Naive thymus-derived CD8-positive, alpha-beta T cell (primary cell): ENCODE measurements at regions of chr4 and their contacts with region 1.

Region 1: DNA sequence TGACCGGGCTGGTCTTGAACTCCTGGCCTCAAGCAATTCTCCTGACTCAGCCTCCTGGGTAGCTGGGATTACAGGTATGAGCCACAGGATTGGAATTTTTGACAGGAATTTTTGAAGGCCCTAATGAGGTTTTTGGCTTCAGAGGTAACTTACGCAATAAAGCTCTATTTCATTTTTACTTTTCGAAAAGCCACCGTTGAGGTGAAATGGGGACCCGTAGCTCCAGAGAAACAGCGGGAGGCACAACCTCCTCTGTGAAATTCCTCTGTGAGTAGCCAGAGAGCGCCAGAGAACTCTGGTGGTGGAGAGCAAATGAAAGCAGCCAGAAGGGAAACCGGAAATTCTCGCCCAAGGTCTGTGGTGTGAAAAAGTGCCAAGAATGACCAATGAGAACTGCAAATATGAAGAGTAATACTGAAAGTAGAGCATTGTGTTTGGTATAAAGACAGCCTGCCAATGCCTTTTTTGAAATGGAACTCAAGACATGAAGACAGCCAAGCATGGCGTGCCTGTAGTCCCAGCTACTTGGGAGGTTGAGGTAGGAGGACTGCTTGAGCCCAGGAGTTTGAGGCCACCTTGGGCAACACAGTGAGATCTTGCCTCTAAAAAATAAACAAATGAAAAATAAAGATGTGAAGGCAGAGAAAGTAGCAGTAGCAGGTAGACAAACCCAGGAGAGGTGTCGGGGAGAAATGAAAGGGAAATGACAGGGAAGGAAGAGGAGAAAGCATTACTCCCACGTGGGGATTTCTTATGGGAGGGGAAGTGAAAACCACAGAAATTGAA is 33.0 kb upstream of the TMEM131L start:
- DNase-seq: peak in 9 of 10 donors; percentile 15 to 75 (median 43)
- ATAC-seq: peak; percentile 52 to 68
- H3K4me3 Mint-ChIP-seq: peak overlapping the region; percentile 68 to 96 (median 86)
- H3K27ac Mint-ChIP-seq: peak overlapping the region; percentile 85 to 99 (median 93)
- H3K4me1 Mint-ChIP-seq: peaks cover 27 to 84% (median 69%) of the 10 kb centered on the region in 4 donors
- H3K27me3 Mint-ChIP-seq: no peaks in the 10 kb centered on the region

Region 2: GRCh38 chr4:153383131-153383530 is 50.0 kb before region 1 on chr4:
- POLR2A ChIA-PET with region 1: no interaction called
- DNase-seq: no peak
- ATAC-seq: no peak
- H3K4me3 Mint-ChIP-seq: no peak overlapping the region
- H3K27ac Mint-ChIP-seq: peak overlapping the region in 1 of 10 donors; percentile 40
- H3K4me1 Mint-ChIP-seq: peaks cover 0 to 5% (median 0%) of the 10 kb centered on the region in 4 donors
- H3K27me3 Mint-ChIP-seq: no peaks in the 10 kb centered on the region

Region 3: GRCh38 chr4:153573881-153574802 is 141.0 kb after region 1 on chr4:
- POLR2A ChIA-PET with region 1: interaction called, 14 read pairs
- DNase-seq: peak; percentile 35 to 86 (median 62)
- ATAC-seq: peak; percentile 93
- H3K4me3 Mint-ChIP-seq: peak overlapping the region in 8 of 10 donors; percentile 3 to 66 (median 50)
- H3K27ac Mint-ChIP-seq: peak overlapping the region in 9 of 10 donors; percentile 44 to 87 (median 79)
- H3K4me1 Mint-ChIP-seq: peaks cover 33 to 74% (median 66%) of the 10 kb centered on the region in 4 donors
- H3K27me3 Mint-ChIP-seq: no peaks in the 10 kb centered on the region